Activated CD4-positive, alpha-beta memory T cell treated with anti-CD3 and anti-CD28 coated beads, Interleukin-2, amount 10 ng/mL, durations not matched to agents 7 days and 5 days (primary cell): ENCODE measurements at regions of chr5 and their contacts with region 1.

Region 1: DNA sequence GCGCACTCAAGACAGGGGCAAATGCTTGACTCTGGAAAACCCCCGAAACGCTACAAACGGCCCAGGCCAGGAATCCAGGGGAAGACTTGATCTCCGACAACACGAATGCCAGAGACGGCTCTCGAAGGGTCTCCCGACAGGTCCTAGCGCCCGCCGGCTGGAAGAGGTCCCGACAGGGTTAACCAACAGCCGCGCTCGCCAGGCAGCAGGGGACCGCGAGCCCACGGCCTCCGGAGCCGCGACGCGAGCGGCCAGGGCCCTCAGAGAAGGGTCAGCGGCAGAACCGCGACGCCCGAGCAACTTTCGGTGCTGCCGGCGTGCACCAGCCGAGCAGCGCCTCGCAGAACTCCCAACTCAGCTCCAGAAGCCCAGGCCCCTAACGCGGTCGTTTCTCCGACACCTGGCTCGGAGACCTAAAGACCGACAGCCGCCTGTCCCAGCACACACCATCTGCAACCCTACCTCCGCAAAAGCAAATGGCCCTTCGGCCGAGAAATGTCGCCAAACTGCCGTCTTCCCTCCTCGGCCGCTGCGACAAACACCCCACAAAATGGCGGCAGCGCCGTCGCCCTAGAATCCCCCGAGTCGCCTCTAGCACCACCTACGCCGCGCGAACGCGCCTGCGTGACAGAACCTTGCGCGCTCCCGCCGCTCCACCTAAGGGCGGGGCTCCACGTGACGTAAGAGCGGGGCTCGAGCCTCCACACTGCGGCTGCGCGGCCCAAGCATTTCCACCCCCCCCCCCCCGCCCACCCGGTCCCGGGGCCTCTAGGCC is at the start of gene CLK4:
- DNase-seq: peak; percentile 96
- H3K4me3 Mint-ChIP-seq: peak within 1 kb of the TSS; percentile 97
- H3K27ac Mint-ChIP-seq: peak within 1 kb of the TSS; percentile 98
- H3K4me1 Mint-ChIP-seq: peaks cover 28% of the 10 kb centered on the region
- H3K27me3 Mint-ChIP-seq: no peaks in the 10 kb centered on the region
- total RNA-seq, gene CLK4: 29.5 to 32.0 TPM

Region 2: GRCh38 chr5:178612299-178612698 is 14.4 kb before region 1 on chr5:
- CTCF ChIA-PET with region 1: no interaction called
- POLR2A ChIA-PET with region 1: interaction called, 16 read pairs
- DNase-seq: no peak
- H3K4me3 Mint-ChIP-seq: no peak overlapping the region
- H3K27ac Mint-ChIP-seq: no peak overlapping the region
- H3K4me1 Mint-ChIP-seq: no peaks in the 10 kb centered on the region
- H3K27me3 Mint-ChIP-seq: no peaks in the 10 kb centered on the region